Naive thymus-derived CD4-positive, alpha-beta T cell (primary cell): ENCODE measurements at regions of chr9 and their contacts with region 1.

Region 1: GRCh38 chr9:133701862-133702797 is 36.0 kb downstream of the SARDH start:
- DNase-seq: peak; percentile 46 to 85 (median 80)
- ATAC-seq: peak; percentile 85
- H3K4me3 ChIP-seq: peak overlapping the region; percentile 70
- H3K4me3 Mint-ChIP-seq: peak overlapping the region; percentile 79 to 93 (median 91)
- H3K27ac ChIP-seq: peak overlapping the region; percentile 91
- H3K27ac Mint-ChIP-seq: peak overlapping the region; percentile 83 to 100 (median 99)
- H3K4me1 ChIP-seq: peaks cover 31 to 62% of the 10 kb centered on the region in 2 donors
- H3K4me1 Mint-ChIP-seq: peaks cover 29 to 85% (median 66%) of the 10 kb centered on the region in 7 donors
- H3K27me3 ChIP-seq: no peaks in the 10 kb centered on the region
- H3K27me3 Mint-ChIP-seq: peaks cover 0 to 19% (median 0%) of the 10 kb centered on the region in 5 donors

Region 2: GRCh38 chr9:133417541-133418461 is 284.3 kb before region 1 on chr9 and contains the start of gene REXO4:
- CTCF ChIA-PET with region 1: no interaction called
- POLR2A ChIA-PET with region 1: no interaction called
- intact Hi-C with region 1: loop called in 1 of 2 experiments (anchors 10 kb)
- DNase-seq: peak; percentile 73 to 88 (median 84)
- ATAC-seq: peak; percentile 93
- H3K4me3 ChIP-seq: peak within 1 kb of the TSS; percentile 87
- H3K4me3 Mint-ChIP-seq: peak within 1 kb of the TSS; percentile 88 to 93 (median 91)
- H3K27ac ChIP-seq: peak within 1 kb of the TSS; percentile 80
- H3K27ac Mint-ChIP-seq: peak within 1 kb of the TSS; percentile 81 to 94 (median 91)
- H3K4me1 ChIP-seq: peaks cover 13 to 14% of the 10 kb centered on the region in 2 donors
- H3K4me1 Mint-ChIP-seq: peaks cover 32 to 60% (median 54%) of the 10 kb centered on the region in 7 donors
- H3K27me3 ChIP-seq: no peaks in the 10 kb centered on the region
- H3K27me3 Mint-ChIP-seq: peaks cover 0 to 3% (median 0%) of the 10 kb centered on the region in 5 donors
- total RNA-seq, gene REXO4: 17.8 to 44.1 (median 28.6) TPM

Region 3: DNA sequence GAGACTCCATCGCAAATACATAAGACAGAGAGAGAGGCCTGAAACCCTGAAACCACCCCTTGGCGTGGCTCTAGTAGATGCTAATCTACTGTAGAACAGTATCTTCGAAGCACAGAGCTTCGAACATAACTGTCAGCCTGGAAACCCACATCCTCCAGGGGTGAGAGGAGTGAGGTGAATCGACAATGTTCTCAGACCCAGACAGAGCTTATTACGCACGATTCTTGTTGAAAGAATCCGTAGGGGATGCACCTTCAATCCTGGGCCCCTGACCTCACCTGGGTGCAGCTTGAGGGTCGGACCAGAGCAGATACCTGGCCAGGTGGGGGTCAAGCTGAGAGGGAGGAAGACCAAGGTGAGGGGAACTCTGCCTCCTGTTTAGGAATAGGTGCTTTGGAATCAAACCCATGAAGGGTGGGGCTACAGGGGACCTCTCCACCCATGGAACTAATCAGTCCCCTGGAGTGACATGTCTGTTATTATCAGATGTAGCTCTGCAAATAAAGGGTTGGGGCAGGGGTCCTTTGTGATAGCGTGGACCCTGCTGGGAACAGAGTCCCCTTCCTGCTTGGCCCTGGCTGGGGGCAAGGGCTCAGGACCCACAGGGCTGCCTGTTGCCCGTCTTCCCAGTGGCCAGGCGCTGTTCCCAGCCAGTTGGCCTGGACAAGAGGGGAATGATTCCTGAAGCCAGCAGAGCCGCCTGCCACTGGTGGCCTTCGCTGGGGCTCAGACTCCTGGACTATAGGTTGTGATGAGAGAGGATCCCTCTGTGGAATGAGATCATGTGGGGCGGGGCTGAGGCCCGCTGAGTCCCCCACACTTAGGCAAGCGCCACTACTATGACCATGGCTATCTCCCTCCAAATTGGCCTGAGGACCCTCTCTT is 24.8 kb before region 1 on chr9:
- CTCF ChIA-PET with region 1: interaction called, 5 read pairs
- POLR2A ChIA-PET with region 1: interaction called, 448 read pairs
- intact Hi-C with region 1: loop called (anchors 1 to 2 kb)
- DNase-seq: peak; percentile 34 to 93 (median 90)
- ATAC-seq: peak; percentile 97
- H3K4me3 ChIP-seq: peak overlapping the region; percentile 6
- H3K4me3 Mint-ChIP-seq: peak overlapping the region; percentile 27 to 84 (median 74)
- H3K27ac ChIP-seq: peak overlapping the region; percentile 84
- H3K27ac Mint-ChIP-seq: peak overlapping the region; percentile 88 to 100 (median 99)
- H3K4me1 ChIP-seq: peaks cover 29 to 45% of the 10 kb centered on the region in 2 donors
- H3K4me1 Mint-ChIP-seq: peaks cover 32 to 65% (median 51%) of the 10 kb centered on the region in 7 donors
- H3K27me3 ChIP-seq: no peaks in the 10 kb centered on the region
- H3K27me3 Mint-ChIP-seq: no peaks in the 10 kb centered on the region

Region 4: GRCh38 chr9:133683586-133684120 is 18.5 kb before region 1 on chr9:
- CTCF ChIA-PET with region 1: interaction called, 29 read pairs
- POLR2A ChIA-PET with region 1: interaction called, 448 read pairs
- intact Hi-C with region 1: loop called (anchors 1 to 2 kb)
- DNase-seq: peak; percentile 47 to 89 (median 83)
- ATAC-seq: peak; percentile 88
- H3K4me3 ChIP-seq: peak overlapping the region; percentile 28
- H3K4me3 Mint-ChIP-seq: peak overlapping the region; percentile 73 to 93 (median 88)
- H3K27ac ChIP-seq: peak overlapping the region; percentile 95
- H3K27ac Mint-ChIP-seq: peak overlapping the region; percentile 99 to 100 (median 99)
- H3K4me1 ChIP-seq: peaks cover 28 to 44% of the 10 kb centered on the region in 2 donors
- H3K4me1 Mint-ChIP-seq: peaks cover 13 to 60% (median 38%) of the 10 kb centered on the region in 7 donors
- H3K27me3 ChIP-seq: no peaks in the 10 kb centered on the region
- H3K27me3 Mint-ChIP-seq: no peaks in the 10 kb centered on the region

Region 5: DNA sequence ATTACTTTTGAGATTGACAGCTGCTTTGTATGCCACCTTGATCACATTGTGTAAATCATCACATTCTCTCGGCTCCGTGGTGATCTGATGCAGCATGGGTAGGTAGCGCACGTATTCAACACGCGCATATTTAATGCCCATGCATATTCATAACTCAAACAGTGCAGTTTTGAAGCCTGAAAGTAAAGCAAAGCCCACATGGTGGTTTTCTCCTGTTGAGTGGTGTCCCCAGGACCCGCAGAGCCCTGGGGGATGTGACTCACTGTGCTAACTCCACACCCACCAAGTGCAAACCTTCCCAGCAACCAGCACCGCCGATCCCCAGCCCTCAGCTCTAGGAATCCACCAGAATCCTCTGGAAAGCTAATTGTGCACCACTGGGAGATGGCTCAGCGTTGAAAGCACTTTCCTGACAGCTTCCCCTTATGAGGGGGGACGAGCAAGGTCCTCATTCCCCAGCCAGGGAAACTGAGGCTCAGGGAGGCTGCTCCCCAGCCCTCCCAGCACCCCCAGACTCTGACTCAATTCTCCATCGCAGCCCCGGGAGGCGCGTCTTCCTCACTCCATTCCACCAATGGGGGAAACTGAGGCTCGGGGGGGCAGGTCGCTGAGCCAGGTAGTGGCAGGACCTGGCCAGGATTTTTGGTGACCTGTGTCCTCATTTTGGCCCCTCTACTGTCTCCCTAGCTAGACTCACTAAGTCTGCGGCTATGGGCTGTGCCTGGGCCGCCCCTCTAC is 10.3 kb before region 1 on chr9:
- CTCF ChIA-PET with region 1: interaction called, 29 read pairs
- POLR2A ChIA-PET with region 1: interaction called, 448 read pairs
- intact Hi-C with region 1: no loop called
- DNase-seq: no peak
- ATAC-seq: no peak
- H3K4me3 ChIP-seq: no peak overlapping the region
- H3K4me3 Mint-ChIP-seq: no peak overlapping the region
- H3K27ac ChIP-seq: no peak overlapping the region
- H3K27ac Mint-ChIP-seq: peak overlapping the region in 3 of 9 donors; percentile 28 to 55 (median 51)
- H3K4me1 ChIP-seq: peaks cover 0 to 6% of the 10 kb centered on the region in 2 donors
- H3K4me1 Mint-ChIP-seq: peaks cover 4 to 22% (median 9%) of the 10 kb centered on the region in 7 donors
- H3K27me3 ChIP-seq: no peaks in the 10 kb centered on the region
- H3K27me3 Mint-ChIP-seq: peaks cover 0 to 3% (median 0%) of the 10 kb centered on the region in 5 donors

Region 6: GRCh38 chr9:133715866-133716563 is 13.9 kb after region 1 on chr9:
- CTCF ChIA-PET with region 1: interaction called, 4 read pairs
- POLR2A ChIA-PET with region 1: interaction called, 14 read pairs
- intact Hi-C with region 1: no loop called
- DNase-seq: peak in 7 of 9 donors; percentile 36 to 63 (median 47)
- ATAC-seq: peak; percentile 62
- H3K4me3 ChIP-seq: no peak overlapping the region
- H3K4me3 Mint-ChIP-seq: no peak overlapping the region
- H3K27ac ChIP-seq: no peak overlapping the region
- H3K27ac Mint-ChIP-seq: peak overlapping the region in 5 of 9 donors; percentile 66 to 93 (median 78)
- H3K4me1 ChIP-seq: peaks cover 0 to 7% of the 10 kb centered on the region in 2 donors
- H3K4me1 Mint-ChIP-seq: peaks cover 0 to 7% (median 6%) of the 10 kb centered on the region in 7 donors
- H3K27me3 ChIP-seq: no peaks in the 10 kb centered on the region
- H3K27me3 Mint-ChIP-seq: no peaks in the 10 kb centered on the region

Region 7: DNA sequence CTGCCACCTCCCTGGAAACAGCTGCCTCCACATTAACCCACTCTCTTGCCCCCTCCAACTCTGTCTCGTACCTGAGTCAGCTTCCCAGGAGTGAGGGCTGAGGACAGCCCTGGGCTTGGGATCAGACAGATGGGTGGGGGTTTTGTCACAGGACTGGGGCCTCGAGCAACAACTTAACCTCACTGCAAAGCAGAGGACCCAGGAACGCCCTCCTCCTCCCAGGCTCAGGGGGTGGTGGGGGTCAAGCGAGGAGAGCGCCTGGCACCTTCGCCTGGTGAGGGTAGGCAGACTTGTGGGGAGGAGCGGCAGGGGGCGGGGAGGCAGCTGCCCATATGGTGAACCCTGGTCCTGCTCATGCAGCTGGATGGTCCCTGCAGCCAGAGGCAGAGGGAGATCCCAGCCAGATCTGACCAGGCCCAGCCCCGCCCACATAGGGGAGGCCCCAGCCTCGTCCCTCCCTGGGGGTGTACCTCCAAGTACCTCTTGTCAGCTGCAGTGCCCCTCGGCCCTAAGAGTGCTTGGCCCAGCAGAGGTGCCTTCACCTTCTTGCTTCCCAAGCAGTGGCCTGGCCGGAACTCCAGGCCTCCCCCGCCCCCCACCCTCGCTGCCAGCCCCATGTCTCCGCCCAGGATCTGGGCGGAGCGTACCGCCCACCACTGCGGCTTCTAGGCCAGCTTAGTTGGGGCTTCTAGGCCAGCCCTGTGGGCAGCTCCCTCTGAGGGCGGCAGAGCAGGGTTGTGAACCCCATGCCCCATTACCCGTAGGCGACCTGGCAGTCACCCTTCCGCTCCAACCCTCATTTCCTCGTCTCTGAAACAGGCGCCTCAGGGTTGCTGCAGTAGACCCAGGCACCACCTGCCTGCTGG is 35.9 kb after region 1 on chr9 and contains the start of gene SARDH:
- CTCF ChIA-PET with region 1: no interaction called
- POLR2A ChIA-PET with region 1: no interaction called
- intact Hi-C with region 1: no loop called
- DNase-seq: peak in 4 of 9 donors; percentile 15 to 51 (median 20)
- ATAC-seq: peak; percentile 70
- H3K4me3 ChIP-seq: peak within 1 kb of the TSS; percentile 31
- H3K4me3 Mint-ChIP-seq: peak within 1 kb of the TSS in 8 of 10 donors; percentile 27 to 62 (median 54)
- H3K27ac ChIP-seq: no peak within 1 kb of the TSS
- H3K27ac Mint-ChIP-seq: peak within 1 kb of the TSS in 1 of 9 donors; percentile 46
- H3K4me1 ChIP-seq: peaks cover 3 to 6% of the 10 kb centered on the region in 2 donors
- H3K4me1 Mint-ChIP-seq: peaks cover 2 to 11% (median 5%) of the 10 kb centered on the region in 7 donors
- H3K27me3 ChIP-seq: no peaks in the 10 kb centered on the region
- H3K27me3 Mint-ChIP-seq: no peaks in the 10 kb centered on the region
- total RNA-seq, gene SARDH: 0.73 to 27.2 (median 16.5) TPM

Region 8: DNA sequence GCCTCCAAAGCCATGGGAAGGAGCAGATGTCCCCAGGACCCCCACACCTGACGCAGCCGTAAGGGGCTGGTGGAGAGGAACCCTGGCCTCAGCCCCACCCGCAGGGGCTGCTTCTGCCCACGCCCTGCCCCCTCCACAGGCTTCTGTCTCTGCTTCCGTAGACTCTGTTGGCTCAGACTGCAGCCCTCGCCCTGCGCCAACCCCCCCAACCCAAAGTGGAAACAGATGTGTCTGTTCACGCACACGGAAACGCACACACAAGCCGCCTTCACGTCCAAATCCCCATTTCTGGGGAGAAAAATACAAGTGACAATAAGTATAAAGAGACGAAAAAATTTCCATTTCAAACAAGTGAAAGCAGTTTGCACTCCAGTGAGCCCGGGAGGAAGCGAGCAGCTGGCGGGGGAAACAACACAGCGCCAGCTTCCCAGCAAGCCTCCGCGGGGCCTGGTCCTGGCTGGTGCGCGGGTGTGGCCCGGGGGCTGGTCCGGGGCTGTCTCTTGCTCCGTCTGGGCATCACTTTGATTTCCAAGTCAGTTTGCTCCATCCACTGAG is 591.6 kb after region 1 on chr9:
- CTCF ChIA-PET with region 1: no interaction called
- POLR2A ChIA-PET with region 1: no interaction called
- intact Hi-C with region 1: no loop called
- DNase-seq: peak in 4 of 9 donors; percentile 7 to 14 (median 10)
- ATAC-seq: peak; percentile 54
- H3K4me3 ChIP-seq: peak overlapping the region; percentile 13
- H3K4me3 Mint-ChIP-seq: peak overlapping the region in 9 of 10 donors; percentile 34 to 81 (median 69)
- H3K27ac ChIP-seq: no peak overlapping the region
- H3K27ac Mint-ChIP-seq: peak overlapping the region in 3 of 9 donors; percentile 42 to 81 (median 70)
- H3K4me1 ChIP-seq: no peaks in the 10 kb centered on the region
- H3K4me1 Mint-ChIP-seq: peaks cover 0 to 14% (median 0%) of the 10 kb centered on the region in 7 donors
- H3K27me3 ChIP-seq: no peaks in the 10 kb centered on the region
- H3K27me3 Mint-ChIP-seq: no peaks in the 10 kb centered on the region

Region 9: GRCh38 chr9:134818000-134818568 is 1116.0 kb after region 1 on chr9:
- CTCF ChIA-PET with region 1: no interaction called
- POLR2A ChIA-PET with region 1: no interaction called
- intact Hi-C with region 1: no loop called
- DNase-seq: no peak
- ATAC-seq: no peak
- H3K4me3 ChIP-seq: no peak overlapping the region
- H3K4me3 Mint-ChIP-seq: no peak overlapping the region
- H3K27ac ChIP-seq: no peak overlapping the region
- H3K27ac Mint-ChIP-seq: no peak overlapping the region
- H3K4me1 ChIP-seq: no peaks in the 10 kb centered on the region
- H3K4me1 Mint-ChIP-seq: no peaks in the 10 kb centered on the region
- H3K27me3 ChIP-seq: no peaks in the 10 kb centered on the region
- H3K27me3 Mint-ChIP-seq: no peaks in the 10 kb centered on the region